Heart left ventricle (tissue), 16 donors: ENCODE measurements at regions of chr1 and their contacts with region 1.

Region 1: GRCh38 chr1:87292684-87293493 is 35.8 kb upstream of the LMO4 start:
- DNase-seq: peak in 4 of 5 donors; percentile 32 to 62 (median 46)
- ATAC-seq: peak in 3 of 4 donors; percentile 59 to 67 (median 63)
- H3K4me3 ChIP-seq: no peak overlapping the region
- H3K27ac ChIP-seq: no peak overlapping the region
- H3K4me1 ChIP-seq: no peaks in the 10 kb centered on the region
- H3K27me3 ChIP-seq: peaks cover 0 to 7% (median 0%) of the 10 kb centered on the region in 9 donors
- CTCF ChIP-seq: peak; percentile 65 to 91 (median 78)
- POLR2A ChIP-seq: no peak

Region 2: DNA sequence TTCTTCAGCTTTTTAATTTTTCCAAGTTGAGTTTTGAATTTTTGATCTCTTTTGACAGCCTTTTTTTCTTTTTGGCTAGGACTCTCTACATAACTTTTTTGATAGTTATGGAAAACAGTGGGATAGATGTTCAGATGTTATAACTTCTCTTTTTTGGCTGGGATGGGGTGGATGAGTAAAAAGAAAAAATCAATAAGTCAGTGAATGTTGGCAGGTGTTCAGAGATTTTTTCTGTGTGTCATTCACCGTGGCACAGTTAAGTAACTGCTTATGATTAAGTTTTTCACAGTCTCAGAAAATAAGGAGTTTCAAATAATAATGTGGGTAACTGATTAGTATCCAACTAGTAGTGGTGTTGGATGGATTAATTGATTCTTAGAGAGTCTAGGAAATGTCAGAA is 354.4 kb before region 1 on chr1:
- intact Hi-C with region 1: no loop called
- DNase-seq: no peak
- ATAC-seq: no peak
- H3K4me3 ChIP-seq: no peak overlapping the region
- H3K27ac ChIP-seq: no peak overlapping the region
- H3K4me1 ChIP-seq: peaks cover 0 to 9% (median 0%) of the 10 kb centered on the region in 12 donors
- H3K27me3 ChIP-seq: no peaks in the 10 kb centered on the region
- CTCF ChIP-seq: no peak
- POLR2A ChIP-seq: no peak

Region 3: GRCh38 chr1:87120779-87121178 is 172.1 kb before region 1 on chr1:
- intact Hi-C with region 1: no loop called
- DNase-seq: no peak
- ATAC-seq: no peak
- H3K4me3 ChIP-seq: no peak overlapping the region
- H3K27ac ChIP-seq: no peak overlapping the region
- H3K4me1 ChIP-seq: no peaks in the 10 kb centered on the region
- H3K27me3 ChIP-seq: no peaks in the 10 kb centered on the region
- CTCF ChIP-seq: peak in 3 of 12 donors; percentile 6 to 10 (median 8)
- POLR2A ChIP-seq: no peak

Region 4: GRCh38 chr1:87953732-87954344 is 660.9 kb after region 1 on chr1:
- intact Hi-C with region 1: loop called in 9 of 10 experiments (anchors 1 to 10 kb)
- DNase-seq: peak in 4 of 5 donors; percentile 56 to 59 (median 58)
- ATAC-seq: peak in 3 of 4 donors; percentile 69 to 83 (median 76)
- H3K4me3 ChIP-seq: no peak overlapping the region
- H3K27ac ChIP-seq: no peak overlapping the region
- H3K4me1 ChIP-seq: peaks cover 0 to 19% (median 0%) of the 10 kb centered on the region in 12 donors
- H3K27me3 ChIP-seq: no peaks in the 10 kb centered on the region
- CTCF ChIP-seq: peak; percentile 51 to 89 (median 77)
- POLR2A ChIP-seq: no peak

Region 5: DNA sequence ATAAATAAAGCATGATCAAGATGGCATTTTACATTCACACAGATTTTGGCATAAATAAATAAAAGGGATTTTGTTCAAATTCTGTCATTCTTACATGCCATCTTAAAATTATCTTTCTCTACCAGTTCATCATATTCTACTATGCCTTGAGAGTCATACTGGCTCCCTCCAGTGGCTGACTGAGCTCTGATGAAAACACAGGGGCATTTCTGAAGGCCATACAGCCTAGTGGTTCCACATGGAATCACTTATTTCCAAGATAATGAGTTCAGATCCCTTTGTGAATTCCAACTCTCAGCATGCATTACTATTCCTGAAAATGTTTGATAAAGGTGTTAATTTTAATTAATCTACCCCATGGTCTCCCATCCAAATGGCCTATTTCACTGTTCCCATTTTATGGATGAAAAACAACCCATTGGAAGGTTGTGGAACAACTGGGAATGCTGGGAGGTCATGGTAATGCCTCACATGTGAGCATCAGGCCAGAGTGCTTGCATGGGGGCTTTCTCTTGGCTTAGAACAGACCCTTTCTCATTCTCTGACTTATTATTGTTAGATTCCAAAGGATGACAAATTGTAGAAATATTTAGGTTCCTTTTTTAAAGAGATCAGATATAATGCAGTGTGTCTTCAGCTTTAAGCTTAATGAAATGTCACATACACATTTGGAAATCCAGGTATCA is 768.7 kb after region 1 on chr1:
- intact Hi-C with region 1: loop called in 8 of 10 experiments (anchors 2 to 10 kb)
- DNase-seq: peak in 3 of 5 donors; percentile 12 to 54 (median 41)
- ATAC-seq: peak in 3 of 4 donors; percentile 45 to 89 (median 81)
- H3K4me3 ChIP-seq: no peak overlapping the region
- H3K27ac ChIP-seq: no peak overlapping the region
- H3K4me1 ChIP-seq: peaks cover 0 to 5% (median 0%) of the 10 kb centered on the region in 12 donors
- H3K27me3 ChIP-seq: no peaks in the 10 kb centered on the region
- CTCF ChIP-seq: peak; percentile 30 to 71 (median 53)
- POLR2A ChIP-seq: no peak

Region 6: GRCh38 chr1:88302843-88303486 is 1010.1 kb after region 1 on chr1:
- intact Hi-C with region 1: loop called in 5 of 10 experiments (anchors 5 to 10 kb)
- DNase-seq: peak in 1 of 5 donors; percentile 16
- ATAC-seq: no peak
- H3K4me3 ChIP-seq: no peak overlapping the region
- H3K27ac ChIP-seq: no peak overlapping the region
- H3K4me1 ChIP-seq: peaks cover 0 to 2% (median 0%) of the 10 kb centered on the region in 12 donors
- H3K27me3 ChIP-seq: no peaks in the 10 kb centered on the region
- CTCF ChIP-seq: peak; percentile 11 to 60 (median 51)
- POLR2A ChIP-seq: no peak